CD8-positive, alpha-beta memory T cell (primary cell): ENCODE measurements at regions of chr19 and their contacts with region 1.

Region 1: GRCh38 chr19:48403606-48404005 is 10.1 kb downstream of the GRIN2D start:
- DNase-seq: peak in 4 of 5 donors; percentile 43 to 73 (median 50)
- H3K4me3 ChIP-seq: no peak overlapping the region
- H3K4me3 Mint-ChIP-seq: no peak overlapping the region
- H3K27ac ChIP-seq: no peak overlapping the region
- H3K27ac Mint-ChIP-seq: peak overlapping the region in 6 of 8 donors; percentile 21 to 88 (median 44)
- H3K4me1 ChIP-seq: no peaks in the 10 kb centered on the region
- H3K4me1 Mint-ChIP-seq: peaks cover 15 to 32% (median 18%) of the 10 kb centered on the region in 3 donors
- H3K27me3 ChIP-seq: no peaks in the 10 kb centered on the region
- H3K27me3 Mint-ChIP-seq: peaks cover 11 to 21% of the 10 kb centered on the region in 2 donors

Region 2: GRCh38 chr19:48372904-48373303 is 30.7 kb before region 1 on chr19:
- CTCF ChIA-PET with region 1: no interaction called
- POLR2A ChIA-PET with region 1: no interaction called
- DNase-seq: no peak
- H3K4me3 ChIP-seq: no peak overlapping the region
- H3K4me3 Mint-ChIP-seq: no peak overlapping the region
- H3K27ac ChIP-seq: no peak overlapping the region
- H3K27ac Mint-ChIP-seq: no peak overlapping the region
- H3K4me1 ChIP-seq: no peaks in the 10 kb centered on the region
- H3K4me1 Mint-ChIP-seq: no peaks in the 10 kb centered on the region
- H3K27me3 ChIP-seq: no peaks in the 10 kb centered on the region
- H3K27me3 Mint-ChIP-seq: no peaks in the 10 kb centered on the region

Region 3: GRCh38 chr19:48720613-48721296 is 317.1 kb after region 1 on chr19:
- CTCF ChIA-PET with region 1: no interaction called
- POLR2A ChIA-PET with region 1: interaction called, 10 read pairs
- DNase-seq: peak; percentile 84 to 93 (median 87)
- H3K4me3 ChIP-seq: peak overlapping the region; percentile 91
- H3K4me3 Mint-ChIP-seq: peak overlapping the region; percentile 93 to 98 (median 97)
- H3K27ac ChIP-seq: peak overlapping the region; percentile 90
- H3K27ac Mint-ChIP-seq: peak overlapping the region; percentile 90 to 99 (median 98)
- H3K4me1 ChIP-seq: peaks cover 23% of the 10 kb centered on the region
- H3K4me1 Mint-ChIP-seq: peaks cover 21 to 27% (median 24%) of the 10 kb centered on the region in 3 donors
- H3K27me3 ChIP-seq: no peaks in the 10 kb centered on the region
- H3K27me3 Mint-ChIP-seq: no peaks in the 10 kb centered on the region